Right ventricle myocardium inferior (tissue), 1 donor: ENCODE measurements at regions of chr21 and their contacts with region 1.

Region 1: DNA sequence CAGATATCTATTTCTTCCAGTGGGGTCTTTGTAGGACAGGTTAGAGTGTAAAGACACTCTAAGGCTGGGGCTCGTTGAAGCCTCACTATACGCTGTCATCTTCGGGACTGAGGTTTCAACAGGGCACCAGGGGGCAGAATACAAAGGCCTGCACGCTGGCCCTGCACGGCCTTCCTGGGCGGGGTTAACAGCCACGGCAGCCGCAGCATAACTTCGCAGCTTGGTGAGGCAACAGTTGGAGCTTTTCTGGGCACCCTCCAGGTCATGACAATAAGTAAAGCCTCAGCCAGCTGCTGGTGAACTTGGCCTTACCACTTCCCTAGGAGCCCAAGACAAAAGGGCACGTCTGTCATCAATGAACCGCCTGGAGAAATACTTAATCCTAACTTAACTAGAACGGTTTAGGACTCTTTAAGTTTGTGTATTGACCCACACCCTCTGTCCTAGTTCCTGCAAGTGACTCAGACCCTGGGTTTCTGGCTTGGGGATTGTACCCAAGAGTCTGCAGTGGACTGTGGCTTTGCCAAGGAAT is 2.3 kb upstream of the RUNX1 start:
- DNase-seq: peak; percentile 94
- ATAC-seq: peak; percentile 94

Region 2: GRCh38 chr21:35400233-35400957 is 349.0 kb after region 1 on chr21:
- intact Hi-C with region 1: loop called (anchors 1 kb)
- DNase-seq: no peak
- ATAC-seq: peak; percentile 65

Region 3: DNA sequence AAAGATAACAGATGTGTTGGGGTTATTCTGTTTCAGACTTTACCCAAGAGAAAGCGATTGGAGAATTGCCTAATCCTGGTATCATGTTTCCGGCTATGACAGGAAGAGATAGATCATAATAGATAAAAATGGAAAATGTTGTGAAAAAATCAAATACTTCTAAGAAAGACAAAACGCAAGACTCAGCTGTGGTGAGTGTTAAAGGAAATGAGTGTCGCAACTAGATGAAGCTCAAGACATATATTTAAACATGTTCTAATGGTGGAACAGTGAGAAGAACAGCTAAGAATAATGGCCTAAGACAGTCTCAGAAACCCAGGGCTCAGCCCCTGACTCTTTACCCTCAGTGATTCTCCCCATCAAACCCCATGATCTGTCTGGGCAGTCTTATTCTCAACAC is 424.4 kb after region 1 on chr21:
- intact Hi-C with region 1: no loop called
- DNase-seq: no peak
- ATAC-seq: peak; percentile 48

Region 4: GRCh38 chr21:35940074-35940927 is 888.9 kb after region 1 on chr21:
- intact Hi-C with region 1: loop called (anchors 2 kb)
- DNase-seq: no peak
- ATAC-seq: peak; percentile 96